Caco-2 (cell line): ENCODE measurements at regions of chr1 and their contacts with region 1.

Region 1: GRCh38 chr1:22976461-22977243 is 4.0 kb upstream of the LACTBL1 start:
- DNase-seq: peak; percentile 71 to 72
- H3K4me3 ChIP-seq: no peak overlapping the region
- H3K4me3 Mint-ChIP-seq: peak overlapping the region; percentile 56
- H3K27ac Mint-ChIP-seq: peak overlapping the region; percentile 75
- H3K4me1 ChIP-seq: no peaks in the 10 kb centered on the region
- H3K4me1 Mint-ChIP-seq: peaks cover 8% of the 10 kb centered on the region
- H3K27me3 ChIP-seq: no peaks in the 10 kb centered on the region
- H3K27me3 Mint-ChIP-seq: peaks cover 5% of the 10 kb centered on the region
- CTCF ChIP-seq: peak; percentile 70 to 73

Region 2: GRCh38 chr1:23084880-23085279 is 108.2 kb after region 1 on chr1:
- CTCF ChIA-PET with region 1: interaction called, 3 read pairs
- POLR2A ChIA-PET with region 1: no interaction called
- intact Hi-C with region 1: loop called (anchors 5 kb)
- DNase-seq: no peak
- H3K4me3 ChIP-seq: no peak overlapping the region
- H3K4me3 Mint-ChIP-seq: no peak overlapping the region
- H3K27ac Mint-ChIP-seq: no peak overlapping the region
- H3K4me1 ChIP-seq: no peaks in the 10 kb centered on the region
- H3K4me1 Mint-ChIP-seq: no peaks in the 10 kb centered on the region
- H3K27me3 ChIP-seq: no peaks in the 10 kb centered on the region
- H3K27me3 Mint-ChIP-seq: no peaks in the 10 kb centered on the region
- CTCF ChIP-seq: no peak

Region 3: DNA sequence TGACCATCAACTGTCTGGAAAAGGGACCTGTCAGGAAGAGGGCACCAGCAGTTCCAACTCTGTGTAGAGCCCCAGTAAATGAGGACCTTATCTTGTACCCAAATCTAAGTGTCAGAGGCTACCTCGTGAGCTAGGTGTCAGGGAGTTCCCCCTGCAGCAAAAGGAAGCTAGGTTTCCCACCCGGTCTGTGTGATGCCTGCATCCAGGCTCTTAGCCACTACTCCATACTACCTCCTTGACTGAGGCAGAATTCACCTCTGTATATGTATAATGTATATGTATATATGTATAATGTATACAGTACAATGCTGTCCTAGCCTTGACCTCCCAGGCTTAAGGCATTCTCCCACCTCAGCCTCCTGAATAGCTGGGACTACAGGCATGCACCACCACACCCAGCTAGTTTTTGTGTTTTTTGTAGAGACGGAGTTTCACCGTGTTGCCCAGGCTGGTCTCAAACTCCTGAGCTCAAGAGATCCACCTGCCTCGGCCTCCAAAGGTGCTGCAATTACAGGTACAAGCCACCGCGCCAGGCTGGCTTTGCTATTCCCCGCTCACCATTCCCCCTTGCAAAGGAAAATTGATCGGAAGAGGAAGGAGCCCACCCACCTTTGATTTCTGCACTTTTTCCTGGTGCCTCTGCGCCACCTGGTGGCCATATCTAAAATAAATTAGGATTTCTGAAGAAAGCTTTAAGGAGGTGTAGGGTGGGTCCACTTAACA is 207.7 kb after region 1 on chr1:
- CTCF ChIA-PET with region 1: interaction called, 3 read pairs
- POLR2A ChIA-PET with region 1: no interaction called
- intact Hi-C with region 1: loop called (anchors 1 kb)
- DNase-seq: peak in 1 of 2 experiments; percentile 45
- H3K4me3 ChIP-seq: peak overlapping the region; percentile 23
- H3K4me3 Mint-ChIP-seq: peak overlapping the region; percentile 64
- H3K27ac Mint-ChIP-seq: no peak overlapping the region
- H3K4me1 ChIP-seq: no peaks in the 10 kb centered on the region
- H3K4me1 Mint-ChIP-seq: peaks cover 7% of the 10 kb centered on the region
- H3K27me3 ChIP-seq: no peaks in the 10 kb centered on the region
- H3K27me3 Mint-ChIP-seq: no peaks in the 10 kb centered on the region
- CTCF ChIP-seq: peak; percentile 63 to 76